Activated CD4-positive, alpha-beta T cell treated with anti-CD3 and anti-CD28 coated beads for 36 hours (primary cell): ENCODE measurements at regions of chr6 and their contacts with region 1.

Region 1: GRCh38 chr6:29942275-29943052 is at the start of gene HLA-A:
- DNase-seq: peak; percentile 96
- ATAC-seq: peak; percentile 91
- H3K4me3 Mint-ChIP-seq: peak within 1 kb of the TSS; percentile 88
- H3K27ac Mint-ChIP-seq: peak within 1 kb of the TSS; percentile 100
- H3K4me1 Mint-ChIP-seq: peaks cover 58% of the 10 kb centered on the region
- H3K27me3 Mint-ChIP-seq: no peaks in the 10 kb centered on the region
- total RNA-seq, gene HLA-A: 1,053 to 1,189 TPM

Region 2: DNA sequence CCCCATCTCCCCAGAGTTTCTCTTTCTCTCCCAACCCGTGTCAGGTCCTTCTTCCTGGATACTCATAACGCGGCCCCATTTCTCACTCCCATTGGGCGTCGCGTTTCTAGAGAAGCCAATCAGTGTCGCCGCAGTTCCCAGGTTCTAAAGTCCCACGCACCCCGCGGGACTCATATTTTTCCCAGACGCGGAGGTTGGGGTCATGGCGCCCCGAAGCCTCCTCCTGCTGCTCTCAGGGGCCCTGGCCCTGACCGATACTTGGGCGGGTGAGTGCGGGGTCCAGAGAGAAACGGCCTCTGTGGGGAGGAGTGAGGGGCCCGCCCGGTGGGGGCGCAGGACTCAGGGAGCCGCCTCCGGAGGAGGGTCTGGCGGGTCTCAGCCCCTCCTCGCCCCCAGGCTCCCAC is 219.2 kb before region 1 on chr6 and contains the start of gene HLA-F:
- CTCF ChIA-PET with region 1: no interaction called
- POLR2A ChIA-PET with region 1: no interaction called
- intact Hi-C with region 1: loop called in 1 of 2 experiments (anchors 5 kb)
- DNase-seq: peak; percentile 88
- ATAC-seq: peak; percentile 89
- H3K4me3 Mint-ChIP-seq: peak within 1 kb of the TSS; percentile 92
- H3K27ac Mint-ChIP-seq: peak within 1 kb of the TSS; percentile 94
- H3K4me1 Mint-ChIP-seq: peaks cover 49% of the 10 kb centered on the region
- H3K27me3 Mint-ChIP-seq: no peaks in the 10 kb centered on the region
- total RNA-seq, gene HLA-F: 216 to 229 TPM

Region 3: DNA sequence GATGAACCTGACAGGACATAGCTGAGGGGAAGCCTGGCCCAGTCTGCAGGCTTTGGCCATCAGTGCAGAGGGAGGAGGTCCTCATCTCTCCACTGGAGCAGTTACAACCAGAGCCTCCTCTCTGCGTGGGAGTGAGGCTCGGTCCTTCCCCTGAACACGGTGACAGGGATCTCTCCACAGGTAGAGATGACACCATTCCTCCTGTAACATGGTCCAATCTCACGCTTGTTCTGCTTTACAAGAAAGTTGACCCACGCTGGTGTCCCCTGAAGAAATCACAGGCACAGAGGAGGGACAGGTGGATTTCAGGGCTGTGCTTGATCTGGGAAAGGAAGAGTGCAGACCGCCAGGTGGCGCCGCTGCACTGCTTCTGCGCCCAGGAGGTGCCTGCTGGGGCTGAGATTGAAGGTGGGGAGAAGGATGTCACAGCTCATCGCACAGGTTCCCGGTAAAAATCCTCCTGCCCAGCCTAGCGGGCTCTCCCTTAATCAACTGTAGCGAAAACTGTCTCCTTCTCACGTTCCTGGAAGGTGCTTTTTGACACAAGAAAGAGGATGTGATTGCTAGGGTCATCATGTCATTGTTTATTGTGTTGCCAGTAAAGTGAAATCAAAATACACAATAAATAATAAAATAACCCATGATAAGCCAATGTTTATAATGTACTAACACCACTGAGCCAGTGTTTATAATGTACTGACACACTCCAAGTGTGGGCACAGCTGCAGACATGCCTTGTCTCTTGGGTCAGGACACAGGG is 94.4 kb before region 1 on chr6:
- CTCF ChIA-PET with region 1: interaction called, 3 read pairs
- POLR2A ChIA-PET with region 1: no interaction called
- intact Hi-C with region 1: loop called in 1 of 2 experiments (anchors 1 kb)
- DNase-seq: peak; percentile 91
- ATAC-seq: peak; percentile 74
- H3K4me3 Mint-ChIP-seq: no peak overlapping the region
- H3K27ac Mint-ChIP-seq: no peak overlapping the region
- H3K4me1 Mint-ChIP-seq: peaks cover 25% of the 10 kb centered on the region
- H3K27me3 Mint-ChIP-seq: peaks cover 44% of the 10 kb centered on the region

Region 4: DNA sequence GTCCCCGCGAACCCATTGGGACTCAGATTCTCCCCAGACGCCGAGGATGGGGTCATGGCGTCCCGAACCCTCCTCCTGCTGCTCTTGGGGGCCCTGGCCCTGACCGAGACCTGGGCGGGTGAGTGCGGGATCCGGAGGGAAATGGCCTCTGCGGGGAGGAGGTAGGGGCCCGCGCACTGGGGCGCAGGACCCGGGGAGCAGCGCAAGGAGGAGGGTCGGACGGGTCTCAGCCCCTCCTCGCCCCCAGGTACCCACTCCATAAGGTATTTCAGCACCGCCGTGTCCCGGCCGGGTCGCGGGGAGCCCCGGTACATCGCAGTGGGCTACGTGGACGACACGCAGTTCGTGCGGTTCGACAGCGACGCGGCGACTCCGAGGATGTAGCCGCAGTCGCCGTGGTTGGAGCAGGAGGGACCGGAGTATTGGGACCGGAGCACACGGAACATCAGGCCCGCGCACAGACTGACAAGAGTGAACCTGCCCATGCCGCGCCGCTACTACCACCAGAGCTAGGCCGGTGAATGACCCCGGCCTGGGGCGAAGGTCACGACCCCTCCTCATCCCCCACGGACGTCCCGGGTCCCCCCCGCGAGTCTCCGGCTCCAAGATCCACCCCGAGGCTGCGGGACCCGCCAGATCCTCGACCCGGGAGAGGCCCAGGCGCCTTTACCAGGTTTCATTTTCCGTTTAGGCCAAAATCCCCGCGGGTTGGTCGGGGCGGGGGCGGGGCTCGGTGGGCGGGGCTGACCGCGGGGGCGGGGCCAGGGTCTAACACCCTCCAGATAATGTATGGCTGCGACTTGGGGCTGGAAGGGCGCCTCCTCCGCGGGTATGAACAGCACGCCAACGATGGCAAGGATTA is 15.8 kb before region 1 on chr6:
- CTCF ChIA-PET with region 1: no interaction called
- POLR2A ChIA-PET with region 1: interaction called, 3 read pairs
- intact Hi-C with region 1: loop called (anchors 1 kb)
- DNase-seq: peak; percentile 92
- ATAC-seq: peak; percentile 91
- H3K4me3 Mint-ChIP-seq: peak overlapping the region; percentile 82
- H3K27ac Mint-ChIP-seq: peak overlapping the region; percentile 94
- H3K4me1 Mint-ChIP-seq: peaks cover 32% of the 10 kb centered on the region
- H3K27me3 Mint-ChIP-seq: no peaks in the 10 kb centered on the region

Region 5: GRCh38 chr6:30066577-30067459 is 124.4 kb after region 1 on chr6 and contains the start of gene PPP1R11:
- CTCF ChIA-PET with region 1: interaction called, 3 read pairs
- POLR2A ChIA-PET with region 1: no interaction called
- intact Hi-C with region 1: loop called in 1 of 2 experiments (anchors 2 kb)
- DNase-seq: peak; percentile 99
- ATAC-seq: peak; percentile 98
- H3K4me3 Mint-ChIP-seq: peak within 1 kb of the TSS; percentile 86
- H3K27ac Mint-ChIP-seq: peak within 1 kb of the TSS; percentile 97
- H3K4me1 Mint-ChIP-seq: peaks cover 53% of the 10 kb centered on the region
- H3K27me3 Mint-ChIP-seq: peaks cover 7% of the 10 kb centered on the region
- total RNA-seq, gene PPP1R11: 47.8 to 59.9 TPM

Region 6: GRCh38 chr6:31356946-31357466 is 1414.5 kb after region 1 on chr6 and contains the start of gene HLA-B:
- CTCF ChIA-PET with region 1: no interaction called
- POLR2A ChIA-PET with region 1: no interaction called
- intact Hi-C with region 1: loop called in 1 of 2 experiments (anchors 5 kb)
- DNase-seq: peak; percentile 91
- ATAC-seq: peak; percentile 80
- H3K4me3 Mint-ChIP-seq: peak within 1 kb of the TSS; percentile 98
- H3K27ac Mint-ChIP-seq: peak within 1 kb of the TSS; percentile 99
- H3K4me1 Mint-ChIP-seq: peaks cover 56% of the 10 kb centered on the region
- H3K27me3 Mint-ChIP-seq: peaks cover 5% of the 10 kb centered on the region
- total RNA-seq, gene HLA-B: 2,101 to 2,412 TPM